Esophagus squamous epithelium (tissue), 5 donors: ENCODE measurements at regions of chr5 and their contacts with region 1.

Region 1: DNA sequence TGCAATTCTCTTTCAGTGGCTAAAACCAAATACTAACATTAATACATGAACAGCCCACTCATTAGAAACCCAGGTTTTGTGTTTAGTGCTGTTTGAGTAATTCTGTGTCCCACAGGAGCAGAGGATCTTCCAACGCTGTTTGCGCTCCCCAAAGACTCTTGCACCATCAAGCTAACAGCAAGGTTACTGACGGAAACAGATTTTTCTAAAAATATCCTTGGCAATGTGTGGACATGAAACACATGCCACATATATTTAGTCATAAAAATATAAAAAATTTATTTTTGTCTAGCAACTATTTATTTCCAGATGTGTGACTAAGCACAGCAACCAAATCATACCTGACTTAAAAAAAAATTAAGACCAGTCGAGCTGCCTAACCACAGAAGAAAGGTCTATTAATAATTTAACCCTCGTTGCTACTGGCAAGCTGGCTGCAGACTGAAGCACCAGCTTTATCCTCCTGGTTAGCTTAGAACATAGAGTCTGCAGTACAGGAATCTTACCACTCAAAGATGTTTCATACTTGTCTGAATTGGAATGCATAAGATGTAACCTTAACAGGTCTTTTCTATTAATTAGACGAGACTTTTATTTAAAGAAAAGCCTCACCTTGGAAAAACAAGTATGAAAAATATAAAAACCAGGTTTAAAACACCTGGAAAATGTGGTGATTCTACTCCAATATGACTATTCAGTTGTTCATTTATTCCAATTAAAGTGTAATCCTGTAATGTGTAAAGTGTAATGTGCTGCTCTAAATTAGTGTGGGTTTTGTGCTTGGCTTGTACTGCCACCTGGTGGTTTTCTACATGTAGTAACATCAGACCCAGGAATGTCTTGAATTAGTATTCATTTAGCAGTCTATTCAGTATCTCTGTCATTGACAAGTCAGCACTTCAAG is 272.5 kb downstream of the EPB41L4A start:
- DNase-seq: no peak
- H3K4me3 ChIP-seq: no peak overlapping the region
- H3K27ac ChIP-seq: no peak overlapping the region
- H3K4me1 ChIP-seq: peaks cover 0 to 30% (median 3%) of the 10 kb centered on the region in 3 donors
- H3K27me3 ChIP-seq: no peaks in the 10 kb centered on the region
- CTCF ChIP-seq: peak; percentile 74 to 93 (median 84)
- POLR2A ChIP-seq: no peak

Region 2: DNA sequence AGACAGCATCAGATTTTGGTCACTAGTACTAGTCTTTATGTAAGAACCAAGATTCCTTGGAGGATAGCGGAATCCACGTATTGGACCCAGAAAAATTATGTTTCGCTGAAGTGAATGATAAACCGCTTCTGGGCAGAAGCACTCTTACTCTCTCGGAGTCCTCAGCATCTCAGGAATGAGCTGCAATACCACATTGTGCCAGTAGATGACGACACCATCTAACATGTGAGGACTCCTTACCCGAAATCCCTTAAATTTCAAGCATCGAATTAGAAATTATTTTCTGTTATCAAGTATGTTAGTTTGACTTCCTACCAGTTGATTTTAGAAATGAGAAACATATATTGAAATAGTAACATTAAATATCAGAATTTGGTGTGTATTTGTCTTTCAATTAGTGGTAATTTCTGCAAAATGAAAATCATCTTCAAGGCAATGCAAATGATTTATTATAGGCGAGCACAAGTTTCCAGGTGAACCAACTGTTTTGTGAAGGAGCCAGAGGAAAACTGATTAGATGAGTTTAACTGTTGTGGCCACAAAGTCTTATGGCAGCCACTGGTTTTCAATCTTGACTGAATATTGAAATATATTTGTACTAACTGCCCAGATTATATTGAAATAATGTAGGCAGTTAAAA is 988.4 kb before region 1 on chr5:
- intact Hi-C with region 1: loop called (anchors 10 kb)
- DNase-seq: no peak
- H3K4me3 ChIP-seq: no peak overlapping the region
- H3K27ac ChIP-seq: no peak overlapping the region
- H3K4me1 ChIP-seq: no peaks in the 10 kb centered on the region
- H3K27me3 ChIP-seq: no peaks in the 10 kb centered on the region
- CTCF ChIP-seq: peak; percentile 90 to 99 (median 97)
- POLR2A ChIP-seq: no peak

Region 3: DNA sequence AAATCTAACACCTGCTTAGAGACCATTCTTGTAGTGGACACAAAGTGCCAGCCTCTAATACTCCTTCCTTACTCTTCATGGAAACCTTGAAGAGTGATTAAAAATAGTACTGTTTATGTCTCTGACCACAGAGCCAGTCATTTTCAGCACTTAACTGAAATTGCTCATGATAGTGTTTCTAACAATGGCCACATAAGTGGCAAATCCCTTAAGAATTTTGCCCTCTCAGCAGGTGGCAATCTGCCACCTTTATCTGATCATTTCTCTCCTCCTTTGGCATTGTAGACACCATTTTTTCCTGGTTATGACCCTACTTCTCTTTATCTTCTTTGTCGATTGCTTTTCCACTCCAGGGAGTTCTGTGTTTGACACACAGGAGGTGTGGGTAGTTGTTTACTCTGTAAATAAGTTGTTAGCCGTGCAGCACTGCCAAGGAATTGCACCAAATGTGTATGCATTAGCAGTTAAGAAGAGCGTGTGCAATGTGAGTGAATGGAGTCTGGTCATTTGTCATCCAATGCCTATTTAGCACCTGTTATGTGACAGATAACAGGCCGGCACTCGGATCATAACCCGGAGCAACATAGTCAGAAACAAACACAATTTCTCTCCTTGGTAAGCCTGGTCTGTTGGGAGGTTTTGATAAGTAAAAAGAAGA is 597.5 kb before region 1 on chr5:
- intact Hi-C with region 1: loop called (anchors 5 kb)
- DNase-seq: no peak
- H3K4me3 ChIP-seq: no peak overlapping the region
- H3K27ac ChIP-seq: no peak overlapping the region
- H3K4me1 ChIP-seq: peaks cover 0 to 12% (median 0%) of the 10 kb centered on the region in 3 donors
- H3K27me3 ChIP-seq: no peaks in the 10 kb centered on the region
- CTCF ChIP-seq: no peak
- POLR2A ChIP-seq: no peak

Region 4: GRCh38 chr5:111984044-111984443 is 162.5 kb before region 1 on chr5:
- intact Hi-C with region 1: no loop called
- DNase-seq: no peak
- H3K4me3 ChIP-seq: no peak overlapping the region
- H3K27ac ChIP-seq: no peak overlapping the region
- H3K4me1 ChIP-seq: no peaks in the 10 kb centered on the region
- H3K27me3 ChIP-seq: no peaks in the 10 kb centered on the region
- CTCF ChIP-seq: no peak
- POLR2A ChIP-seq: no peak